BJ (cell line): ENCODE measurements at regions of chr19 and their contacts with region 1.

Region 1: GRCh38 chr19:55605207-55605636 is 225 bp upstream of the ZNF865 start:
- DNase-seq: peak; percentile 83
- H3K4me3 ChIP-seq: peak overlapping the region; percentile 90
- H3K27me3 ChIP-seq: no peaks in the 10 kb centered on the region
- CTCF ChIP-seq: no peak

Region 2: DNA sequence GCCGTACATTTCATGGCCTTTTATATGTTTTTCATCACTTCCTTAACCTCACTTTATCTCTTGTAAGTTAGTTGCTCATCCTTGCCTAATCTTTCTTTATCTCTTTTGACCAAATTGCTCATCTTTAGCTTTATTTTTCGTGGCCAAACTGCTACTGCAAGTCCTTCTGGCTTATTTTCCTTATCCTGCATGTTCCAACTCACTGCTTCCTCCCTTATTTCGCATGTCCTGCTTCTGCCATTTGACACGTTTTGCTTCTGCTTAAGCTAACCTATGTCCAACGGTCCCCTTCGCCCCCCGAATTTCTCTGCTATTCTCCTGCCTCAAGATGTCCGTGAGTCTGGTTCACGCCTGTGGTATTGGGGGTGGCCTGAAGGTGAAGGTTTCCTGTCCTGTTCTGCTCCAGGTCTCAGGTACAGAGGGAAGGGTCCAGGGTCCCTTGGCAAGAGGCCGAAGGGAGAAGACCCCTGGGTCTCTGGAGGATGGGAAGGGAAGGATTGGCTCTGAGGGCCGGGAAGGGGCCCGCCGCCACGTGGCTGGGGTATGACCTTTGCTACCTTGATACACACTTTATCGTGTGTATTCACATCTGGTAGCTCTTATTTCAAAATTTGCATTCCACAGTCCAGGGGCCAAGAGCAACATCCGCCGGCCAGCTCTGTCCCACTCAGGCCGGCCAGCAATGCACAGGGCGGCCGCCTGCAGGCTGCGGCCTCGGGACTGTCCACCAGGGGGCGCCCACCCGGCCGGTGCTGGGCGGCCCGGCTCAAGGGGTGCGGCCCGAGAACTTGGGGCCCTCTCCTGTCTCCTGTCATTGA is 137.8 kb before region 1 on chr19:
- CTCF ChIA-PET with region 1: interaction called, 14 read pairs
- POLR2A ChIA-PET with region 1: no interaction called
- DNase-seq: no peak
- H3K4me3 ChIP-seq: no peak overlapping the region
- H3K27me3 ChIP-seq: no peaks in the 10 kb centered on the region
- CTCF ChIP-seq: peak; percentile 82

Region 3: GRCh38 chr19:55484593-55485438 is 120.4 kb before region 1 on chr19 and contains the start of gene NAT14:
- CTCF ChIA-PET with region 1: interaction called, 10 read pairs
- POLR2A ChIA-PET with region 1: interaction called, 3 read pairs
- DNase-seq: no peak
- H3K4me3 ChIP-seq: peak within 1 kb of the TSS; percentile 82
- H3K27me3 ChIP-seq: no peaks in the 10 kb centered on the region
- CTCF ChIP-seq: no peak
- polyA plus RNA-seq, gene NAT14: 20.4 and 34.8 TPM in 2 replicates

Region 4: GRCh38 chr19:55516878-55517620 is 88.2 kb before region 1 on chr19:
- CTCF ChIA-PET with region 1: interaction called, 30 read pairs
- POLR2A ChIA-PET with region 1: no interaction called
- DNase-seq: no peak
- H3K4me3 ChIP-seq: peak overlapping the region; percentile 34
- H3K27me3 ChIP-seq: no peaks in the 10 kb centered on the region
- CTCF ChIP-seq: peak; percentile 98

Region 5: DNA sequence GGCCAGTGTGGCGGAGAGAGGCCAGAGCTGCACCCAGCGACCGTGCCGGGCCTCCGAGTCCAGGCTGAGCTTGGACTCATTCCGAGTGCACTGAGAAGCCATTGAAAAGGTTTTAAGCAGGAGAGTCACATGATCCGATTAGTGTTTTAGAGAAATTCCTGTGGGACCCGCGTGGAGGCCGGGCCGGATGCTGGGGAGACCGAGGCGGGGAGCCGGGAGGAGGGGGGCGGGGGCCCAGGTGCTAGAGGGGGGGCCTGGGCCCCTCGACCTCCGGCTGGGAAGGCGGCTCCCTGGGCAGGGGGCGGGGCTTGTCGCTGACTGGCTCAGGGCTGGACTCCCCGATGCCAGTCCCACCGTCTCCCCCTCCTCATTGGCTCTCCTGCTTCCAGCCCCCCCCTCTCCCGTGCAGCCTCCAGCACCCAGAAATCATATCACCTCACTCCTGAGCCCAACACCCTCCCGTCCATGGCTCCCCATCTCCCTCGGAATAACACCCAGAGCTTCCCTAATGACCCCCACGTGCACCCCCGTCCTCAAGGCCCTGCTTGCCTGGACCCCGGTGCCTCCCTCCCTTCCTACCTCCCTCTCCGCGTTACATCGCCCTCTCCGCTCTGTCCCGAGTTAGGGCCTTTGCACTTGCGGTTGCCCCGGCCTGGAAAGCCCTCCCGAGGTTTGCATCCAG is 19.4 kb before region 1 on chr19:
- CTCF ChIA-PET with region 1: interaction called, 10 read pairs
- POLR2A ChIA-PET with region 1: no interaction called
- DNase-seq: no peak
- H3K4me3 ChIP-seq: peak overlapping the region; percentile 34
- H3K27me3 ChIP-seq: no peaks in the 10 kb centered on the region
- CTCF ChIP-seq: no peak

Region 6: DNA sequence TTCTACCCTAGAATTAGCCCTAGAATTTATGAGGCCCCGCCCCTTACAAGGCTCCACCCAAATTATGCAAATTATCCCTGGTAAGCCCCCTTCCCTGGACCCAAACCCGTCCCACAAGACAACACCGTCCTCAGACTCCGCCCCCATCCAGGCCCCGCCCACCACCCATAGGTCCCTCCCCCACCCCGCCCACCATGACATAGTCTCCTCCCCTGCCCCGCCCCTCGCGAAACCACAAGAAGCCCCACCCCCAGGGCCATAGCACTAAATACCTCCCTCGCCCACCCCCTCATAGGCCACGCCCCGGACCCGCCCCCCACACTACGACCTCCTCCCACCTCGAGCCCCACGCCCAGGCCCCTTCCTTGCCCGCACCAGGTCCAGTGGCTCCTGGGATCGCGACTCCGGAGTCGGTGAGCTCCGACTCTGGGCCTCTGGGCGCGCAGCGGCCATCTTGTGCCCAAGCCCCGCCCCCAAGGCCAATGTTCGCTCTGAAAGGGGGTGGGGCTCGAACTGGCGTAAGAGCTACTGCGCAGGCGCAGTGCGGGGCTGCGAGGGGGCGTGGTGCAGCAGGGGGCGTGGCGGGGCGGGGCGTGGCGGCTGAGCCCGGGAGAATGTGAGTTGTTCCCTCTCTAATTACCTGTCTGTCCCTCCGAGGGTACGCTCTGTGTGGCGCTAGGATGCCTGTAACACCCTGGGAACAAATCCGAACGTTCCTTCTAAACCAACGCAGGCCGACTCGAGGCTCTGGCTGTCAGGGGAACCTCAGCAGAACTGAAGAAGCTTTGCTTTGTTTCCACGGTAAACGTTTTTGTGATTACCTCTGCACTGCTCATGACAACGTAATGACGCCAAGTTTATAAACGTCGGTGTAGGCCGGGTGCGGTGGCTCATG is 19.1 kb after region 1 on chr19 and contains the start of gene ZNF784:
- CTCF ChIA-PET with region 1: interaction called, 40 read pairs
- POLR2A ChIA-PET with region 1: no interaction called
- DNase-seq: no peak
- H3K4me3 ChIP-seq: peak within 1 kb of the TSS; percentile 82
- H3K27me3 ChIP-seq: no peaks in the 10 kb centered on the region
- CTCF ChIP-seq: no peak
- polyA plus RNA-seq, gene ZNF784: 2.9 and 4.5 TPM in 2 replicates

Region 7: DNA sequence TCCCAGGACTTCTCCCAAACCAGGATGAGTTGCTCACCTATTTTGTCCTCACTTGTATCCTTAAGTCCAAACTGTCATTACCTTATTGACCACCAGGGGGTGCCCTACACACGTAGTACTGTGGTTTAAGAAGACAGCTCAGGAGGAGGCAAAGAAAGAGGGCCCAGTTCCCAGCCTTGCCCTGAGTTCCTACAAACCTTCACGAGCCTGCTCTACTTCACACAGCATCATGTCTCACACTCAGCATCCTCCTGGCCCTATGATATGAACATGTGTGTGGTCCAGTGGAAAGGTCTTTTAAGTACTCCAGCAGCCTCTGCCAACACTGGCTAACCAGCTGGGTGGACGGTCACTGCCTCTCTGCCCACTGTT is 27.2 kb after region 1 on chr19:
- CTCF ChIA-PET with region 1: interaction called, 30 read pairs
- POLR2A ChIA-PET with region 1: no interaction called
- DNase-seq: no peak
- H3K4me3 ChIP-seq: no peak overlapping the region
- H3K27me3 ChIP-seq: no peaks in the 10 kb centered on the region
- CTCF ChIP-seq: peak; percentile 83

Region 8: DNA sequence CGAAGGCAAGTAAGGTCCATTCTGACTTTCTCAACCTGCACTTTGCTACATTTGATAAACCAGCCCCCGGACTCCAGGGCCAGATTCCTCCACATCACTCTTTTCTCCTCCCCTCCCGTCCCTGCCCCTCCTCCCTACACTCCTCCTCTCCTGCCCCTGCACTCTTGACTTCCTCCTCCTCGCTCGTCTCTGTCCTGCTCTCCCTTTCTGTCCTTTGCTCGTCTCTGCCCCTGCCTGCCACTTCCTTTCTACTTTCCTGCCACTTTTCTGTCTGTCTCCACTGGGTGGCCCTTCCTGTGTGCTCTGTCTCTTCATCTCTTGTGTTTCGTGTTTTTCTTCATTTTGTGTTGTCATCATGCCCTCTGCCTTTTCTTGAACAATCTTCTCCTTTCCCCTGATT is 56.6 kb after region 1 on chr19:
- CTCF ChIA-PET with region 1: no interaction called
- POLR2A ChIA-PET with region 1: no interaction called
- DNase-seq: no peak
- H3K4me3 ChIP-seq: no peak overlapping the region
- H3K27me3 ChIP-seq: no peaks in the 10 kb centered on the region
- CTCF ChIP-seq: no peak

Region 9: DNA sequence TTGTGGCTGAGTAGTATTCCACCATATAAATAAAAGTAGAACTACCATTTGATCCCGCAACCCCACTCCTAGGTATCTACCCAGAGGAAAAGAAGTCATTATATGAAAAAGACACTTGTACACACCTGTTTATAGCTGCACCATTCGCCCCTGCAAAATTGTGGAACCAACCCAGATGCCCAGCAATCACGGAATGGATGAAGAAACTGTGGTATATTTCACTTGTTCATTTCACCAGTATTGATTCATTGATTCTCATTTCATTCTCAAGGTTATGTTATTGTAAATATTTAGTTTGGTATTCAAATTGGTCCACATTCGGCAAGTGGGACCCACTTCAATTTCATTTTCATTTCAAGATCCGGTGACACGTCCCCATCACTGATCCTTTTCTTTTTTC is 145.5 kb after region 1 on chr19:
- CTCF ChIA-PET with region 1: no interaction called
- POLR2A ChIA-PET with region 1: no interaction called
- DNase-seq: no peak
- H3K4me3 ChIP-seq: no peak overlapping the region
- H3K27me3 ChIP-seq: no peaks in the 10 kb centered on the region
- CTCF ChIP-seq: no peak